ENCODE measurements at regions of chr4 and their contacts with region 1.

Region 1: DNA sequence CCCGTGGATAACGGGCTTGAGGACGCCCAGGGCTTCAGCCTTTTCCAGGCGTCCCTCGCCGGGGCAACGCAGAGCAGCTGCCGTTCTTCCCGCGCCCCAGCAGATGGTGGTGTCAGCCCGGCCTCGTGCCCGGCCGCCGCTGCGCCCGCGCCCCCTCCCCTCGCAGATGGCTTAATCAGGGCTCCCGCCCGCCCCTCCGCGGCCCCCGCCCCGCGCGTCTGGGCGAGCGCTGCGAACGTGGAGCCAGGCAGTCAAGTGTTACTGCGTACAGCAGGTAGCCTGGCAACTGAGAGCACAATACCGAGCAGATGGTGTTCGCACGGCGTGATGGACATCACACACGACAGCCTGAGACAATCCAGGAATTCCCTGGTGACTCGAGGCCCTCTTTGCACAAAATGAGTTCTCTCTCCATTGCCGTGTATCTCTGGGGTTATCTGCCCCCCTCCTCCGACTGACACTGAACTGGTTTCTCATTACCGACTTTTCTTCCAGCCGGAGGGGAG is 69.3 kb downstream of the MGST2 start:
- DNase-seq: peak; percentile 78 to 96 (median 88)
- H3K4me3 ChIP-seq: peak overlapping the region; percentile 44 to 81 (median 64)
- H3K27ac ChIP-seq: peak overlapping the region in 58 of 59 donors; percentile 13 to 92 (median 86)
- H3K27me3 ChIP-seq: no peaks in the 10 kb centered on the region
- CTCF ChIP-seq: peak; percentile 41 to 95 (median 87)

Region 2: GRCh38 chr4:138938366-138938690 is 796.6 kb before region 1 on chr4:
- intact Hi-C with region 1: no loop called
- DNase-seq: no peak
- H3K4me3 ChIP-seq: peak overlapping the region in 25 of 59 donors; percentile 5 to 47 (median 28)
- H3K27ac ChIP-seq: no peak overlapping the region
- H3K27me3 ChIP-seq: no peaks in the 10 kb centered on the region
- CTCF ChIP-seq: peak in 55 of 56 donors; percentile 26 to 80 (median 59)

Region 3: DNA sequence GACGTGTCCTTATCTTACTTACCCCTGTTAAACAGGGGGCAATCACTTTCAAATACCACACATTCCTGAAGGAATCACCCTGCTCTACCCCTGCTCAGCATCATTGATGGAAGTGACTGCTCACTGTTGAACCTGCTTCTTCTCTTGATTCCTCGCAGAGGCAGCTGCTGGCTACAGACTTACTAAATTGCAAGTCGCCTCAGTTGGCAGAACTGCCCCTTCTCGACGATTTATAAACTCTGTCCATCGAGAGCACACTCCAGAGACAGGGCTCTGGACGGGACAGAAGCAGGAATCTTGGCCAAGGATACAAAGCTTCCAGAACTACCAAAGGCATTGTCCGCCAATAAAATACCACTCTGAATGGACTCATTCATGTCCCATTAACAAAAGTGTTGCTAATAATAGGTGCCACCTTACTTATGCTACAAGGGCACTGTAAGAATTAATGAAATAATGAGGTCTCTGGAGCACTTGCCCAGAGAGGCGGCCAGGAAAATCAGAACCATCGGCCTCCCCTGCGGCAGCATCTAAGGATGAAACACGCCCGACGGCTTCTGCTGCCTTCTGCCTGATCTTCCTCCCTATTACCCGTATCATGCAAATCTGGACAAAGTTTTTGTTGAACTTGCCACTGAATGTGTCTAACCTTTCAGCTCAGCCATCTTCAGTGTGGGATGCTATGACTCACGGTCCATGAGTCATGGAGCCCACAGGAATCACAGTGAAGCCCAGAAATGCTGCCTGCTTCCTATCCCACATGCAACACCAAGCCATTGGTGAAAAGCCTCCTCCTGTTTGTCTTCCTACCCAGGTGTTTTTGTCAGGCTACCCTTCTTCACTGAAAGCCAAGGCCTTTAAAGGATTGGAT is 254.2 kb after region 1 on chr4:
- intact Hi-C with region 1: loop called in 1 of 2 experiments (anchors 10 kb)
- DNase-seq: peak in 5 of 10 donors; percentile 50 to 81 (median 66)
- H3K4me3 ChIP-seq: peak overlapping the region in 3 of 59 donors; percentile 9 to 38 (median 12)
- H3K27ac ChIP-seq: peak overlapping the region in 4 of 59 donors; percentile 1 to 33 (median 24)
- H3K27me3 ChIP-seq: no peaks in the 10 kb centered on the region
- CTCF ChIP-seq: no peak

Region 4: GRCh38 chr4:140004549-140004895 is 269.6 kb after region 1 on chr4:
- intact Hi-C with region 1: loop called in 1 of 2 experiments (anchors 10 kb)
- DNase-seq: peak in 9 of 10 donors; percentile 33 to 86 (median 51)
- H3K4me3 ChIP-seq: peak overlapping the region; percentile 30 to 76 (median 54)
- H3K27ac ChIP-seq: peak overlapping the region in 28 of 59 donors; percentile 6 to 78 (median 46)
- H3K27me3 ChIP-seq: no peaks in the 10 kb centered on the region
- CTCF ChIP-seq: peak in 3 of 56 donors; percentile 9 to 13 (median 12)

Region 5: DNA sequence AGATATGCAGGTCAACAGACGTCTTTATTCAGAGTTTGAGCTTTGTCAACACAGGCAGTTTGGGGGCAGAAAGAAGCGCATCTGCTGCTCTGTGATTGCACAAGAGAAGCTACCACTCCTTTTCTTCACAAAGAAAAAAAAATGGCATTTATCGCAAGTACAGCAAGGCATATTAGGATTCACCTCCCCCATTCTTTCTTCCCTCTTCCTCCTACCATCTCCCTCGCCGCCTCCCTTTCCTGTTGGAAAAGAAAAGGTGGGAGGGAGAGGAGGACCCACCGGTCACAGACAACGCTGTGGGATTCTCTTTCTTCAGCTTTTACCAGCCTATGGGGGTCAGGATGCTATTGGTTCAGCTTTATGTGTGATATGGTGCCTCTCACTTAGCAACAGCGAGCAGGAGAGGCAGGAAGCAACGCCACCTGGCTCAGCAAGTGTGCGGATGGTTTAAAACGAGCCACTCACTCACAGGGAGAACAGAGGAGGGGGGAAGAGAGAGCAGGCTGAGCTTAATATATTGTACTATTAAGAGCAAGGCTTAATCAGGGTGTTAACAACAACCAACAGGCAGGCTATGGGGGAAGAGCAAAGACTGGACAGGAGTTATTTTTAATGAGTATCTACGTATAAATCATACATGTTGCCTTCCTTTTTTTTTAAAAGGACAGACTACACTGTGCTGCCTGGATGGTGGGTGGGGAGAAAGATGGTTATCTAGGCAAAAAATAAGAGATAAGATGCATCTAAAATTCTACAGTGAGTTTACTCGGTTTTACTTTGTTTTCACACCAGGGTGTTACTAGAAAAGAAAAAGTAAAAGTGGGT is 314.3 kb after region 1 on chr4:
- intact Hi-C with region 1: loop called (anchors 2 to 10 kb)
- DNase-seq: peak in 9 of 10 donors; percentile 22 to 79 (median 58)
- H3K4me3 ChIP-seq: peak overlapping the region; percentile 8 to 68 (median 49)
- H3K27ac ChIP-seq: peak overlapping the region in 39 of 59 donors; percentile 0 to 78 (median 51)
- H3K27me3 ChIP-seq: no peaks in the 10 kb centered on the region
- CTCF ChIP-seq: peak in 33 of 56 donors; percentile 7 to 48 (median 24)

Region 6: GRCh38 chr4:140326395-140326993 is 591.6 kb after region 1 on chr4:
- intact Hi-C with region 1: loop called in 1 of 2 experiments (anchors 10 kb)
- DNase-seq: peak in 3 of 10 donors; percentile 27 to 66 (median 60)
- H3K4me3 ChIP-seq: no peak overlapping the region
- H3K27ac ChIP-seq: no peak overlapping the region
- H3K27me3 ChIP-seq: no peaks in the 10 kb centered on the region
- CTCF ChIP-seq: peak; percentile 7 to 90 (median 72)

Region 7: DNA sequence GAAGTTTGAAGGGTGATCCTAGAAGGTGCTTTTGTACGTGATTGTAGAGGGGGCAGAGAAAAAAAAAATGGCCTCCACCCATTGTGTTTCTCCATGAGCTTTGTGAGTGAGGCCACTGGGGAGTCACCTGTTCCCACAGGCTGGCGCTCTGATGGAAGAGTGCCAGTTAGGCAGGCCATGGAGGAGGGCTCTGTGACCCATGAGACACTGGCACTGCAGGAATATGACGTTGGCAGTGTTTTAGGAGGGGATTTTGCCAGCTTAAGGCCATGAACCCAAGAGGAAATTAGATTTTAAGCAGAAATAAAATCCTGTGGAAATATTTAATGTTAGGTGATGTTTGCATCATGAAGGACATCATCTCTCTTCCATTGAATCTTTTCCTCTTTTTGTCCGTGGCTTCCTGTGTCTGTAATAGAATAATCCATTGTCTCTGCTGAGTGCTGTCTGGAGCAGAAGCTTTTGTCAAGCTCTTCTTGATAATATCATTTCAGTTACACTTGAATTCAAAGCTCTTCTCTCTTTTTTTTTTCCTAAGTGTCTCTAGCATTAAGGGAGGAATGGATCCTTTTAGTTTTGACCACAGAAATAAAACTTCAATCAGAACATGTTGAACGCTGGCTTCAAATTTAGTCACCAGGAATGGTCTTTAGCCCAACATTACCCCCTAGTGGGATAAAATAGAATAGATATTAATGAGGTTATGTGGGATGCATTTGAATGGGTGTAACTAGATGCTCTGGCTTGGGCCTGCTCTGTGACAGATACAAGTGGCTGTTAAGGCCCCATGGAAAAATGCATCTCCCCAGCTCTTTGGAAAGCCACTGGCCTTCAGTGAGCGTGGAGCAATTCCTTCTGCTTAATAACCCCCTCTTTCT is 874.9 kb after region 1 on chr4:
- intact Hi-C with region 1: loop called in 1 of 2 experiments (anchors 10 kb)
- DNase-seq: no peak
- H3K4me3 ChIP-seq: peak overlapping the region in 19 of 59 donors; percentile 0 to 35 (median 10)
- H3K27ac ChIP-seq: peak overlapping the region in 1 of 59 donors; percentile 39
- H3K27me3 ChIP-seq: peaks cover 0 to 7% (median 0%) of the 10 kb centered on the region in 45 donors
- CTCF ChIP-seq: peak; percentile 31 to 84 (median 60)

Measured in dorsolateral prefrontal cortex (tissue), 120 donors.